ENCODE measurements at regions of chr13 and their contacts with region 1.

Region 1: DNA sequence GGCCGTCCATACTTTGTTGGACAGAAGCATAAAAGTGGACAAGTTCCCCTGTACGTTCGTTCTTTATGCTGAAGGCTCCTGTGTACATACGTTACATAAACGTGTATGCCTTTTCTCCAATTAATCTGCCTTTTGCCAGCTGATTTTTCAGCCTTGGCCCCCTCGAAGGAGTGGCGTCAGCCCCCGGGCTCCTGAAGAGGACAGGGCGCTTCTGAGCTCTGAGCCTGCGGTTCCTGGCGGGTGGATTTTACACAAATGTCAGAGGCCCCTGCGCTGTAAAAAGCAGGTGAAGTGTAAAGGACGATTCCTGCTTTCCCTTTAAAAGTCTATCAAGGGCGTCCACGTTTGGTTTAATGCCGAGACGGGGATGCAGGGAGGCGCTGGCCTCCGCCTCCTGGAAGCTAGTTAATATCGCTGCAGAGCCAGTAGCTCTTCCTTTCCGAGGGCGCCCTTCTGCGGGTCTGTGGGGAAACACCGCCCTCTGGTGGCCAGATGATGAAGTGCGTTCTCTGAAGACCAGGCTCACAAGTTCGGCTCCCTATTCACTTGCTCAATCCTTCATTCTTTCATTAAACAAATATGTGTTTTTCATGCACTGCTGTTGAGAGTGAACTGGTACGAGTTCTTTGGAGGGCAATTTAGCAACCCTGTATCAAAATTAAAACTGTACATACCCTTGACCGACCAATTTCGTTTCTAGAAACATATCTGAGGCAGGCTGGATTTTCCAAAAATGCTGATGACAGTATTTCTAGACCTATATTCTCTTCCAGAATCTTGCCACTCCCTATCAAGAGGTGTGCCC is 62.0 kb downstream of the GPR12 start:
- DNase-seq: peak; percentile 20
- ATAC-seq: peak; percentile 88
- H3K4me3 ChIP-seq: no peak overlapping the region
- H3K27ac ChIP-seq: no peak overlapping the region
- H3K4me1 ChIP-seq: no peaks in the 10 kb centered on the region
- H3K27me3 ChIP-seq: no peaks in the 10 kb centered on the region
- CTCF ChIP-seq: peak; percentile 89 to 96 (median 91)
- EP300 ChIP-seq: no peak
- POLR2A ChIP-seq: no peak
- RAD21 ChIP-seq: peak; percentile 91

Region 2: DNA sequence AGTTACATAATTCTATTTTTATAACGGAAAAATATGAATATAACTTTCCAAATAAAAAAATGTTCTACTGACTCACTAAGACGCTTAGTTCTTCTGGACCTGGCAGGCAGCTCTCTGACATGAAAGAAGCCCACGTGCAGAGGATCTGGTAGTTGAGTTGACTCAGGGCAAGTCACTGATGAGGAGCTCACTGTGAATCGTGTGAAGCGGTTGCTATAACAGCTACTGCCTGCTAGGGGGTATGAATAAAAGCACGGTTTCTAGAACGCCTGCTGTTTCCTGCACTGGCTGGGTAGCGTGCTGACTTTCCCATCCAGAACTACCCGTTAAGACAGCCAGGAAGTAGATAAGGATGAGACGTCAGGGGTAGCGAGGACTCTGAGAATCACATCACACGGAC is 195.8 kb before region 1 on chr13:
- CTCF ChIA-PET with region 1: no interaction called
- POLR2A ChIA-PET with region 1: no interaction called
- RAD21 ChIA-PET with region 1: interaction called, 8 read pairs
- SMC1A ChIA-PET with region 1: no interaction called
- in situ Hi-C with region 1: no loop called
- intact Hi-C with region 1: loop called (anchors 5 kb)
- DNase-seq: no peak
- ATAC-seq: peak; percentile 29; the same call in 1 of the 3 replicates
- H3K4me3 ChIP-seq: no peak overlapping the region
- H3K27ac ChIP-seq: no peak overlapping the region
- H3K4me1 ChIP-seq: no peaks in the 10 kb centered on the region
- H3K27me3 ChIP-seq: no peaks in the 10 kb centered on the region; a peak in 1 of 4 replicates
- CTCF ChIP-seq: no peak
- EP300 ChIP-seq: no peak
- POLR2A ChIP-seq: no peak
- RAD21 ChIP-seq: no peak

Measured in GM12878 (cell line).